IMR-90 (cell line): ENCODE measurements at regions of chr10 and their contacts with region 1.

Region 1: DNA sequence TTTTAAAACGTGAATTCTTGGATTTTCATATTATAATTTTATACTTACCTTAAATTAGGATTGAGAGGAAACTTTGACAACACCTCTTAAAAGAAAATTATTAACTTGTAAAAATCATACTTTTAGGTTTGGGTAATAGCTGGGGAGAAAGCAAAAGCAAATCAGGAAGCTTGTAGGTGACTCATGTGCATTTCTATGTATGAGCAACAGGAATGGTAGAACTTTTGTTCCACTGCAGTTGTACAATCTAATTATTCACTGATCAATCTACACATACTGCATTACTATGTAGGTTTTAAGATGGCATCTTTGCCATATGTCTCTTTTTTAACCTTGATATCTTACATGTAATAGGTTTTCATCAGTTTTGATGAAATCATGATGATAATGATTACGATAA is 223.2 kb downstream of the PRKG1 start:
- DNase-seq: peak; percentile 74
- ATAC-seq: peak; percentile 74
- H3K4me3 ChIP-seq: no peak overlapping the region
- H3K27ac ChIP-seq: no peak overlapping the region
- H3K4me1 ChIP-seq: peaks cover 4% of the 10 kb centered on the region
- H3K27me3 ChIP-seq: no peaks in the 10 kb centered on the region
- CTCF ChIP-seq: no peak
- POLR2A ChIP-seq: no peak
- RAD21 ChIP-seq: no peak

Region 2: DNA sequence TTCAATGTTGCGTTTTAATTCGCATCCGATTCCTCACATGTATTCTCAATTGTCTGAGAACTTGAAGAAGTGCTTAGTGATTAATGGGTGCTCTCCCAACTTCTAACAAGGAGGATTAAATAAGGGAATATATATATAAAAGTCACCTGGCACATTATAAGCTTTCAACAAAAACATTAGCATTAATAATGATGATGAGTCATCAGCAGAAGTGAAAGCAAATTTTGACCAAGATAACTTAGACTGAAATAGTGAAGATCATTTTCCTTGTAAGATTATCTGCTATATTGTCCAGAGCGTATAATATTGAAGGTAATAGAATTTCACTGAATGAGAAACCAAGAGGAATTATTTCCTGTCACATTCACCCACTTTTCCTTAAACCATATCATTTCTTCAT is 1054.7 kb before region 1 on chr10:
- CTCF ChIA-PET with region 1: no interaction called
- POLR2A ChIA-PET with region 1: no interaction called
- dilution Hi-C with region 1: no loop called
- in situ Hi-C with region 1: no loop called
- intact Hi-C with region 1: no loop called
- DNase-seq: no peak
- ATAC-seq: no peak
- H3K4me3 ChIP-seq: no peak overlapping the region
- H3K27ac ChIP-seq: no peak overlapping the region
- H3K4me1 ChIP-seq: no peaks in the 10 kb centered on the region
- H3K27me3 ChIP-seq: peaks cover 13% of the 10 kb centered on the region
- CTCF ChIP-seq: no peak
- POLR2A ChIP-seq: no peak
- RAD21 ChIP-seq: no peak

Region 3: GRCh38 chr10:51285601-51286000 is 11.8 kb before region 1 on chr10:
- CTCF ChIA-PET with region 1: interaction called, 3 read pairs
- POLR2A ChIA-PET with region 1: no interaction called
- dilution Hi-C with region 1: no loop called
- in situ Hi-C with region 1: no loop called
- intact Hi-C with region 1: loop called (anchors 1 kb)
- DNase-seq: no peak
- ATAC-seq: no peak
- H3K4me3 ChIP-seq: no peak overlapping the region
- H3K27ac ChIP-seq: no peak overlapping the region
- H3K4me1 ChIP-seq: no peaks in the 10 kb centered on the region
- H3K27me3 ChIP-seq: no peaks in the 10 kb centered on the region
- CTCF ChIP-seq: no peak
- POLR2A ChIP-seq: no peak
- RAD21 ChIP-seq: no peak